ENCODE measurements at regions of chr1 and their contacts with region 1.

Region 1: DNA sequence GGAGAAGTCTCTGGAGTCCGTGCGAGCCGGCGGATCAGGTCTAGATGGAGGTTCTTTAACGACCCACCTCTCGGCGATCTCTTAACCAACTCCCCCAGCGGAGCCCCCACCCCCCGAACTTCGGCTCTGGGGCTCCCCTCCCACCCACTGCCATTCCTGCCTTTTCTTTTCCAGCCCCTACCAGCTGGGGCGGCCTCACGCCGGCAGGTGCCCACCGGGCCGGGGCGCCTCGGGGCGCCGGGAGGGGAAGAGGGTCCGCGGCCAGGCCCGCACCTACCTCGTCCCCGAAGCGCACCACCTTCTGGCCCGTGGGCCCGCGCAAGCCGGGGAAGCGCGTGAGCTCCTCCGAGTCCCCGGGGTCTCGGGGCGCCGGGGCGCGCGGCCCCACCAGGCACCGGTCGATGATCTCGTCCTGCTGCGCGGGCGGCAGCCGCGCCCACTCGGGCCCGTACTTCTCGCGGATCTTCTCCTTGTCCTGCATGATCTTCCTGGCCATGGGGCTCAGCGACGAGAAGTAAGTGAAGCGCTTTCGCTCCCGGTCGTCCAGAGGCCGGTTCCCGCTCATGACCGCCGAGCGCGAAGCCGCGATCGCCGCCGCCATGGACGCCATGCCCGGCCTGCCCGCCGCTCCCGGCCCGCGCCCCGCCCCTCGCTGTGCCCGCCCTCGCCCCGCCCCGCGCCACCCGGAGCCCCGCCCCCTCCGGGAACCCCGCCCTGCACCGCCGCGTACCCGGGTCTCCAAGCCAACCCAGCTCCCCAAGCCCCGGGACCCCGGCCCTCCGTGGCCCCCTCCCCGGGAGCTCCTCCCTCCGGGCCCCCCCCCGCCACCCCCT is at the start of gene C1orf198:
- DNase-seq: peak in 1 of 2 donors; percentile 82
- H3K4me3 ChIP-seq: peak within 1 kb of the TSS; percentile 94 to 98
- H3K27ac ChIP-seq: peak within 1 kb of the TSS; percentile 96 to 99
- H3K4me1 ChIP-seq: peaks cover 9 to 29% of the 10 kb centered on the region in 2 donors
- H3K27me3 ChIP-seq: no peaks in the 10 kb centered on the region
- CTCF ChIP-seq: no peak
- total RNA-seq, gene C1orf198: 225 TPM

Region 2: GRCh38 chr1:230797942-230798418 is 70.1 kb before region 1 on chr1:
- intact Hi-C with region 1: loop called (anchors 2 kb)
- DNase-seq: peak in 1 of 2 donors; percentile 79
- H3K4me3 ChIP-seq: no peak overlapping the region
- H3K27ac ChIP-seq: no peak overlapping the region
- H3K4me1 ChIP-seq: no peaks in the 10 kb centered on the region
- H3K27me3 ChIP-seq: no peaks in the 10 kb centered on the region
- CTCF ChIP-seq: peak; percentile 73 to 90 (median 78)

Region 3: GRCh38 chr1:230825063-230825721 is 42.9 kb before region 1 on chr1:
- intact Hi-C with region 1: loop called (anchors 1 kb)
- DNase-seq: peak in 1 of 2 donors; percentile 66
- H3K4me3 ChIP-seq: peak overlapping the region; percentile 24 to 32
- H3K27ac ChIP-seq: peak overlapping the region; percentile 90 to 94
- H3K4me1 ChIP-seq: peaks cover 24 to 51% of the 10 kb centered on the region in 2 donors
- H3K27me3 ChIP-seq: no peaks in the 10 kb centered on the region
- CTCF ChIP-seq: no peak

Region 4: DNA sequence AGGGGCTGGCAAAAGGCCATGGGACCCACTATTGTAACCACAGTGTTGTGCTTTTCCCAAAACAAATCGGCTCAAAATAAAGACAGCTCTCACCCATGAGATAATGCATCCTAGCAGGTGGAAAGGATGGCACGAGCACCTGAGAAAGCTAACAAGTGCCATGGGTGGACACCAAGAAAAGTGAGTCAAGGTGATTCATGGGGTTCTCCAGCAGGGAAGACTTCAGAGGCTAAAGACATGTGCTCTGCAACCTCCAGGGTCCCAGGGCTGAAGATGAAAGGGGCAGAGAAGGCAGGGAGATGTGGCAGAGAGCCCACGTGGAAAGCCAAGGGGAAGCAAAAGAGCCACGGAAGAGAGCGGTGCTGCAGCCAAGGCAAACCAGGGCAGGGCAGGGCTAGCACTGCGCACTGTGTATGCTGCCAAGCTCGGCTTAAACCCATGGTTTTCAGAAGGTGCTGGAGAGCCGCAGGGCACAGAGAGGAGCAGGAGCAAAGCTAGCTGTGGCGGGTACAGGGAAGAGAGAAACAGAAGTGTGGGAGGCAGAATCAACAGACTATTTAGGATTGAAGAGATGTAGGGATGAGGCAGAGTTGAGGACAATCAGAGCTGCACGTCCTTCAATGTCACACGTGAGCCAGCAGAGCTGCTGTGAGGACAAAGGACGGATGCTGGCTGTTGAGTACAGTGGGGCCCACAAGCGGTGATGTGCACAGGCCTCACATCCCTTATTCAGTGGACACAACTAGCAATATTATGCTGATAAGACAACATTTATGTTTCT is 42.0 kb after region 1 on chr1:
- intact Hi-C with region 1: loop called (anchors 1 kb)
- DNase-seq: peak in 1 of 2 donors; percentile 73
- H3K4me3 ChIP-seq: peak overlapping the region in 1 of 2 donors; percentile 7
- H3K27ac ChIP-seq: peak overlapping the region; percentile 23 to 74
- H3K4me1 ChIP-seq: peaks cover 9 to 16% of the 10 kb centered on the region in 2 donors
- H3K27me3 ChIP-seq: no peaks in the 10 kb centered on the region
- CTCF ChIP-seq: no peak

Measured in ascending aorta (tissue), 2 donors.